Posterior cingulate gyrus (tissue), 11 donors: ENCODE measurements at regions of chr21 and their contacts with region 1.

Region 1: GRCh38 chr21:16002874-16003466 is 273.2 kb downstream of the USP25 start:
- DNase-seq: no peak

Region 2: GRCh38 chr21:15564907-15565306 is 438.1 kb before region 1 on chr21:
- intact Hi-C with region 1: no loop called
- DNase-seq: no peak

Region 3: DNA sequence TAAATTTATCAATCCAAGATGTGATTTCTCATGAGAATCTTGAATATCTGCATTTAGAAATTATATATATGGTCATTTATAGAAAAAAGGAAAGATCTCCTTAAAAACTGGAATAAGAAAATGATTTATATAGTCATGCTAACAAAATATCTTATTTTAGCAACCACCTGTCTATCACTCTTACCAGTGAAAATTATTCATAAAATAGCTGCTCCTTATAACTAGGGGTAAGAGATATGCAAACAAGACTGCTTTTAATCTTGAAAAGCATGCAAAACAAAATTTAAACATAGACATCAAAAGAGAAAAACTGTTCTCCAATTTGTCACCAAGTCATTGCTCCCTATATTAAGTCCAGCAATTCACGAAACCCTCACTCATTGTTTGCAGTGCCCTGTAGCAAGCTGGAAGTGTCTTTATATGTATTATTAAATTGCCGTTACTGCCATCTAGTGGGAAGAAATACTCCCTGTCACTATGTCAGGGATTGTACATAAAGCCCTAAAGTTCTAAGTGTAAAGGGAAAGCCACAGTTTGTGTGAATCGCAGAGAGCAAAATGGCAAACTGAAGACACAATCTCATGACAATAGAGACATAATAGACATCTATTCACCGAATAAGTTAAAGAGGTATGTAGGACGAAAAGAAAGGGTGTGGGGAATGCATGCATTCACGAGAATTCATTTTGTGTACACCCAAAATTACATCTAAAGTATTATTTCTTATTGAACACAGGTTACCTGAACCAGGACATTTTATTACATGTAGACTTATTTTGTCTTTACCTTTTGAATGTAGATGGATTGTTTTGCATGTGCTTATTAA is 327.3 kb after region 1 on chr21:
- intact Hi-C with region 1: loop called (anchors 5 kb)
- DNase-seq: peak in 1 of 10 donors; percentile 20